Breast epithelium (tissue), 4 donors: ENCODE measurements at regions of chr7 and their contacts with region 1.

Region 1: GRCh38 chr7:119664601-119665000 is 608.4 kb upstream of the KCND2 start:
- DNase-seq: no peak
- H3K4me3 ChIP-seq: no peak overlapping the region
- H3K27ac ChIP-seq: no peak overlapping the region
- H3K4me1 ChIP-seq: no peaks in the 10 kb centered on the region
- H3K27me3 ChIP-seq: no peaks in the 10 kb centered on the region
- CTCF ChIP-seq: no peak
- POLR2A ChIP-seq: no peak

Region 2: GRCh38 chr7:119026391-119026790 is 638.2 kb before region 1 on chr7:
- intact Hi-C with region 1: no loop called
- DNase-seq: no peak
- H3K4me3 ChIP-seq: no peak overlapping the region
- H3K27ac ChIP-seq: no peak overlapping the region
- H3K4me1 ChIP-seq: no peaks in the 10 kb centered on the region
- H3K27me3 ChIP-seq: no peaks in the 10 kb centered on the region
- CTCF ChIP-seq: no peak
- POLR2A ChIP-seq: no peak

Region 3: GRCh38 chr7:119320316-119320715 is 344.3 kb before region 1 on chr7:
- intact Hi-C with region 1: loop called (anchors 10 kb)
- DNase-seq: no peak
- H3K4me3 ChIP-seq: no peak overlapping the region
- H3K27ac ChIP-seq: no peak overlapping the region
- H3K4me1 ChIP-seq: no peaks in the 10 kb centered on the region
- H3K27me3 ChIP-seq: no peaks in the 10 kb centered on the region
- CTCF ChIP-seq: no peak
- POLR2A ChIP-seq: no peak